Activated CD8-positive, alpha-beta T cell treated with anti-CD3 and anti-CD28 coated beads, Interleukin-2, amount 10 ng/mL, durations not matched to agents 7 days and 5 days (primary cell): ENCODE measurements at regions of chr16 and their contacts with region 1.

Region 1: GRCh38 chr16:11535471-11535870 is 51.2 kb downstream of the LITAF start:
- DNase-seq: no peak
- ATAC-seq: no peak
- H3K4me3 Mint-ChIP-seq: no peak overlapping the region
- H3K27ac Mint-ChIP-seq: no peak overlapping the region
- H3K4me1 Mint-ChIP-seq: peaks cover 1% of the 10 kb centered on the region
- H3K27me3 Mint-ChIP-seq: peaks cover 2% of the 10 kb centered on the region

Region 2: DNA sequence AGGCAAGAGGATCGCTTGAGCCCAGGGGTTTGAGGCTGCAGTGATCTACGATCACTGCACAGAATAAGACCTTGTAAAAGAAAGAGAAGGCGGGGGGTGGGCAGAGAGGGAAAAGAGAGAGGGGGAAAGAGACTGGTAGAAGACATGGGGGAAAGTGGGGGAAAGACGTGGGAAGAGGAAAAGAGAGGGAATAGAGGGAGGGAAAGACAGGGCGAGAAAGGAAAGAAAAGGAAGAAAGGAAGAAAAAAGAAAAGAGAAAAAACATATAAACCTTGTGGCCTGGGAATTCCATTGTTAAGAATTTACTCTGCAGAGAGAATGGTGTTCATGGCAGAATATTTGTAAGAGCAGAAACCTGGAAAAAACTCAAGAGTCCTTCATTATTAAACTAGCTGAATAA is 69.8 kb before region 1 on chr16:
- CTCF ChIA-PET with region 1: no interaction called
- POLR2A ChIA-PET with region 1: no interaction called
- DNase-seq: no peak
- ATAC-seq: no peak
- H3K4me3 Mint-ChIP-seq: no peak overlapping the region
- H3K27ac Mint-ChIP-seq: no peak overlapping the region
- H3K4me1 Mint-ChIP-seq: no peaks in the 10 kb centered on the region
- H3K27me3 Mint-ChIP-seq: no peaks in the 10 kb centered on the region

Region 3: DNA sequence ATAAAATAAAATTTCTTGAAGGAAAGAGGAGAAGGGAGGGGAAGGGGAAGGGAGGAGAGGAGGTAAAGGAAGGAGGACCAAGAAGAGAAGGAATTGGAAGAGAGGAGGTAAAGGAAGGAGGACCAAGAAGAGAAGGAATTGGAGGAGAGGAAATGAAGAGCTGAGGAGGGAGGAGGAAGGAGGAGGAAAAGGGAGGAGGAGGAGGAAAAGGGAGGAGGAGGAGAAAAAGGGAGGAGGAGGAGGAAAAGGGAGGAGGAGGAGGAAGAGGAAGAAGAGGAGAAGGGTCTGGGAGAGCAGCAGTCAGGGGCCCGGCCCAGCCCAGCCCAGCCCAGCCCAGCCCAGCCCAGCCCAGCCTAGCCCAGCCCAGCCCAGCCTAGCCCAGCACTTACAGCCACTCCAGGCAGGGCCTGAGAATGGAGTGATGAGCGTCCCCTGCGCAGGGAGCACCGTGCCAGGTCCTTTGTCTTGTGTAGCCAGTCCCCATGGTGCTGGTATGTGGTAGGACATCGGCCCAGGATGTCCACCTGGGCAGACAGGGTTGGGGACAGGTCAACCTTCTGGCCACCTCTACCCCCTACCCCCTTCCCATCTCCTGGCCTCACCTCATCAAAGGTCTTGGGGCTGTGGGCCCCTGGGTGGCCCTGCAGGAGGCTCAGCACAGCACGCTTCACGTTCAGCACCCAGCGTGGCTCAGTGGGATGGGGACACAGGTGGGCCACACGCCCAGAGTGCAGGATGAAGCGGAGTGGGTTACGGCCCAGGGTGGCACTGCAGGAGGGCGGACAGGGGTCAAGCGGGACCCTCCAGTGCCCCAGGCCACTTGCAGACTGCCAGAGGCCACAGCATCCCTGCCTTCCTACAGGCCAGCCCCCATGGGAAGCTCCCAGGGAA is 19.7 kb before region 1 on chr16:
- CTCF ChIA-PET with region 1: interaction called, 17 read pairs
- POLR2A ChIA-PET with region 1: no interaction called
- DNase-seq: no peak
- ATAC-seq: no peak
- H3K4me3 Mint-ChIP-seq: no peak overlapping the region
- H3K27ac Mint-ChIP-seq: no peak overlapping the region
- H3K4me1 Mint-ChIP-seq: no peaks in the 10 kb centered on the region
- H3K27me3 Mint-ChIP-seq: no peaks in the 10 kb centered on the region

Region 4: GRCh38 chr16:11560701-11561449 is 25.4 kb after region 1 on chr16:
- CTCF ChIA-PET with region 1: interaction called, 24 read pairs
- POLR2A ChIA-PET with region 1: no interaction called
- DNase-seq: peak; percentile 83
- ATAC-seq: peak; percentile 95
- H3K4me3 Mint-ChIP-seq: peak overlapping the region; percentile 76
- H3K27ac Mint-ChIP-seq: peak overlapping the region; percentile 93
- H3K4me1 Mint-ChIP-seq: peaks cover 81% of the 10 kb centered on the region
- H3K27me3 Mint-ChIP-seq: no peaks in the 10 kb centered on the region

Region 5: DNA sequence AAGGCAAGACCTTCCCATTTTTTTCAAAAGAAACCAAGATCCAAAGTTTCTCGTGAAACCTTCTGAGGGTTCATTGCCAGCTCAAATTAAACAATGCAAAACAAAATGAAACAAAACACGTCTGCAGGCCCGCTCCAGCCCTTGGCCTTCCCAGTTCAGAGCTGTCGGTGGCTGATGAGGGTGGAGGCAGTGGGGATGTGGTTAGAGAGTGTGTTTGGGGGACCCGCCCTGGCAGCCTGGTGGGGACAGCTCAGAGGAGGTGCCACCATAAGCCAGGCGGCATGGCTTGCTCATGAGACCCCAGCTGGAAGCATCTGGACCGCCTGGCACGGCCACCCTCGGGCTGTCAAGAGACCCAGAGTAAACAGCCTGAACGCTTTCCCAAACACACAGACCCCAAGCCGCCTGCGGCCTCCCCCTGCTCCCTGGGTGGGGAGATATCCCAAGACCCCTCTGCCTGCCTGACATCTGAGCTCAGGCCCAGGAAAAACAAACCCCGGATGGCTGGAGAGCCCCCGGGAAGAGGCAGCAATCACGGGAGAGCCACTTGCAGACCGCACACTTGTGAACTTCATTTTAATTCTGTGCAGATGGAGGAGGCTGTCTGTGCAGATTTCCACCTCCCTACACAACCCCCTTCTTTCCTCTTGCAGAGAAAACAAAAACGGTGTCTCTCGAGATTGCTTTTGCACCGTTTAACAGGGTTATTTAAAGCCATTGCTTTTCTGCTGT is 86.6 kb after region 1 on chr16:
- CTCF ChIA-PET with region 1: interaction called, 15 read pairs
- POLR2A ChIA-PET with region 1: no interaction called
- DNase-seq: peak; percentile 81
- ATAC-seq: peak; percentile 82
- H3K4me3 Mint-ChIP-seq: peak overlapping the region; percentile 66
- H3K27ac Mint-ChIP-seq: peak overlapping the region; percentile 85
- H3K4me1 Mint-ChIP-seq: peaks cover 70% of the 10 kb centered on the region
- H3K27me3 Mint-ChIP-seq: no peaks in the 10 kb centered on the region

Region 6: DNA sequence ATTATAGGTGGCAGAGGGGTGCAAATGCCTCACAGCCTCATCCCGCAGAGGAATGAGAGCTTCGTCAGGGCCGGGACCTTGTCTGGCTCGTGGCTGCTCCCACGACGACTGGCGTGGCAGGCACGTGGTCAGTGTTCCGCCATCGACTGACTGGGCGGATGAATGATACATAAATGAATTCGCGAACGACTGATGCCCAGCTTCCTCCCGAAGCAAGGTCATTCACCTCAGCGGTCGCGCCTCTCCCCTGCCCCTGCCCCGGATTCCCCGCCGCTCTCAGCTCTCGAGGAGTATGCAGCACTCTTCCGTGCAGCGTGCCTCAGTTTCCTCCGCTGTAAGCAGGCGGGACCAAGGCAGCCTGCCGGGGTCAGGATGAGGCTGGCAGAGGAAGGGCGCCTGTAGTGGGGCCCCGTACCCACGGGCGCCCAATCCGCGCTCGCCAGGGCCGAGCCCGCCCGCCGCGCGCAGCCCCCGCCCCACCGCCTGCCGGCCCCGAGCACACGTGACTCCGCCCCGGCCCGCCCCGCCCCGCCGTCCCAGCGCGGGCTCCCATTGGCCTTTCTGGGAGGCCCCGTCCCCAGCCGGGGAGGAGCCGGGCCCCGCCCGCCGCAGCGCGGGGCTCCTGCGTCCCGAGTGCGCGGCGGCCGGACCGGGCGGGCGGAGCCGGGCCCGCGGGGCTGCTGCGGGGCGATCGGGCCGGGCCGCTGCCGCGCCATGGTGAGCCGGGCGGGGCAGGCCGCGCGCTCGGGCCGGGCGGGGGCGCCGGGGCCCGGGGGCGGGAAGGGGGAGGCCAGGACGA is 132.6 kb after region 1 on chr16 and contains the start of gene SNN:
- CTCF ChIA-PET with region 1: interaction called, 12 read pairs
- POLR2A ChIA-PET with region 1: interaction called, 3 read pairs
- DNase-seq: peak; percentile 89
- ATAC-seq: peak; percentile 89
- H3K4me3 Mint-ChIP-seq: peak within 1 kb of the TSS; percentile 84
- H3K27ac Mint-ChIP-seq: peak within 1 kb of the TSS; percentile 97
- H3K4me1 Mint-ChIP-seq: peaks cover 78% of the 10 kb centered on the region
- H3K27me3 Mint-ChIP-seq: no peaks in the 10 kb centered on the region
- total RNA-seq, gene SNN: 27.3 to 28.9 TPM